Right ventricle myocardium inferior (tissue), 1 donor: ENCODE measurements at regions of chr15 and their contacts with region 1.

Region 1: DNA sequence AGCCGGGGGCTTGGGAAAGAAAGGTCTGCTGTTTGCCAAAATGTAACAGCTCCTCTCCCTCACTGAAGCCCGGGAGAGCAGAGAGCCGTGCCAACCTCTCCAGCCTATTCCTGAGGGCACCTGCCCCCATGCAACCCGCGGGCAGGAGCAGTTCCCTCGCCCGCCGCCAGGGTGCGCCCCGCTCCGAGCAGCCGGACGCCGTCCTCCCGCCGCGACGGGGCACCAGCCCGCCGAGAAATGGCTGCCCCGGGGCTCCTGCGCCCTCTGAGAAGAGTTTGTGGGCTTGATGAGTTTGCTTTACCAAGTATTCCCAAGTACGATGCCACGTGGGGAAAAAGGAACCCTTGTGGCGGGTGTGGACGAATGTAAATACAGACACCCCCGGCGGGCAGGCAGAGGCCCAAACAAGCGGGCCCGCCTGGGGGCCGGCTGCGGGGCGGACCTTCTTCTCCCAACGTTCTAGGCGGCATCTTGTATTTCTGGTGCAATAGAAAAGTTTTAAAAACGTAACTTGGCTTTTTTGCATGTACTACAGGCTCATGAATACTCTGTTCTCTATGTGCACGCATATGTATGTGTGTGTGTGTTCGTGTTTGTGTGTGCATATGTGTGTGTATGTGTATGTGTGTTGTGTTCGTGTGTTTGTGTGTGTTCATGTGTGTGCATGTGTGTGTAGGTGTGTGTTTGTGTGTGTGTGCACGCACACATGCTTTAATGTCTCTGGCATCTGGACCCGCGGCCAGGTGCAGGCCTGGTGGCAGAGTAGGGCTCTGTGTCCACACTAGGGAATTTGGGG is 162.9 kb downstream of the CHSY1 start:
- DNase-seq: peak; percentile 92
- ATAC-seq: peak; percentile 77

Region 2: GRCh38 chr15:101014921-101015841 is 73.8 kb before region 1 on chr15:
- intact Hi-C with region 1: loop called (anchors 2 kb)
- DNase-seq: peak; percentile 88
- ATAC-seq: peak; percentile 74

Region 3: DNA sequence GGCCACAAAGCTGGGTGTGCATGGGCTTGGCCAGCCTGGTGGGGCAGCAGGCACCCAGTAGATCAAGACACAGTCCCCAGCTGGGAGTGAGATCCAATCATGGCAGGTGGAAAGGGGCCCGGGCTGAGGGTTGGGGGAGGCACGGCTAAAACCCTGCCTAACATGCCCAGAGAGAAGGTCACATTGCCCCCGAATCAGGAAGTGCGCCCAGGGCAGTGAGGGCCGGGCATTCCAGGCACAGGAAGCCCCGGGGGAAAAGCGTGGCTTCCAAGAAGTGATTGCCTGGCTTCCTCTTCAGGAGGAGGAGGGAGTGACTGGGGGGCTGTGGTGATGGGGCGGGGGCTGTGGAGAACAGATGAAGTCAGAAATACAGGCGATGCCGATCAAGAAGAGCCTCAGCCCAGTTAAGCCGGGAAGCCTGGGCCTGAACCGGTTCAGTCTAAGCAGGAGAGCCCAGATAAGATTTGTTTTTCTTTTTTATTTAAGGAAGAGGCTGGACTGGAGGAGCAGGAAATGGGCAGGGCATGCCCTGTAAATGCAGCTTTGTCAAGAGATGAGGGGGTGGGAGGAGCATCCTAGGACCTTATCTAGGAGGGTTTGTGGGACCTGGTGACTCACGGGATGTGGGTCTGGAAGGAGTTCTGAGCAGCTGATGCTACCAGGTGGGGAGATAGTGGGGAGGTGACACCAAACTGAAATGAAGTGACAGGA is 78.9 kb after region 1 on chr15:
- intact Hi-C with region 1: loop called (anchors 5 kb)
- DNase-seq: peak; percentile 85
- ATAC-seq: peak; percentile 75